ENCODE measurements at regions of chr11 and their contacts with region 1.

Region 1: DNA sequence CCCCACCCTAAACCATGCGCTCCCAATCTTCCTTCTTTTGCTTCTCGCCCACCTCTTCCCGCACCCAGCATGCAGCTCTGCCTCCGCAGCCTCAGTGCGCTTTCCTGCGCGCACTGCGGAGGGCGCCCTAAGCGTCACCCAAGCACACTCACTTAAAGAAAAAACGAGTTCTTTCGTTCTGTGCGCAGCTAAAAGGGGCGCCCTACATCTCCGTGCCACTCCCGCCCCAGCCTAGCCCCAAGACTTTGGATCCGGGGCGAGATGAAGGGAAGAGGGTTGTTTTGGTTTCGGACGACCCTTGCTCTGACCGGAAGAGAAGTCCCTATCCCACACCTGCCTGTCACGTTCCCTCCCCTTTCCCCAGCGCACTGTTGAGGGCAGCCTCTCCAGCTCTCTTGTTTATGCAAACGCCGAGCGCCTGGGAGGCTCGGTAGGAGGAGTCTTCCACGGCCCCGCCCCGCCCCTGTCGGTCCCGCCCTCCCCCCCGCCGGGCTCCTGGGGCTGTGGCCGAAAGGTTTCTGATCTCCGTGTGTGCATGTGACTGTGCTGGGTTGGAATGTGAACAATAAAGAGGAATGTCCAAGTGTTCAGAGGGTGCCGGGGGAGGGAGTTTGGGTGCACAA is 5.3 kb downstream of the VSIG2 start:
- DNase-seq: no peak
- ATAC-seq: peak; percentile 89
- H3K4me3 ChIP-seq: peak overlapping the region; percentile 48 to 80
- H3K27ac ChIP-seq: no peak overlapping the region
- H3K4me1 ChIP-seq: peaks cover 4% of the 10 kb centered on the region; the same call in 1 of the 2 replicates
- H3K27me3 ChIP-seq: peaks cover 25% of the 10 kb centered on the region
- CTCF ChIP-seq: peak; percentile 73

Region 2: GRCh38 chr11:124673333-124674167 is 73.2 kb before region 1 on chr11 and contains the starts of genes SIAE and SPA17:
- CTCF ChIA-PET with region 1: interaction called, 5 read pairs
- POLR2A ChIA-PET with region 1: no interaction called
- in situ Hi-C with region 1: no loop called
- intact Hi-C with region 1: loop called (anchors 5 kb)
- DNase-seq: peak; percentile 81
- ATAC-seq: peak; percentile 97
- H3K4me3 ChIP-seq: peak within 1 kb of the TSS; percentile 67 to 75
- H3K27ac ChIP-seq: peak within 1 kb of the TSS; percentile 93
- H3K4me1 ChIP-seq: peaks cover 13% of the 10 kb centered on the region
- H3K27me3 ChIP-seq: no peaks in the 10 kb centered on the region
- CTCF ChIP-seq: no peak
- total RNA-seq, gene SIAE: 14.9 TPM
- total RNA-seq, gene SPA17: 10.1 TPM

Measured in Panc1 (cell line).